OCI-LY7 (cell line): ENCODE measurements at regions of chr19 and their contacts with region 1.

Region 1: DNA sequence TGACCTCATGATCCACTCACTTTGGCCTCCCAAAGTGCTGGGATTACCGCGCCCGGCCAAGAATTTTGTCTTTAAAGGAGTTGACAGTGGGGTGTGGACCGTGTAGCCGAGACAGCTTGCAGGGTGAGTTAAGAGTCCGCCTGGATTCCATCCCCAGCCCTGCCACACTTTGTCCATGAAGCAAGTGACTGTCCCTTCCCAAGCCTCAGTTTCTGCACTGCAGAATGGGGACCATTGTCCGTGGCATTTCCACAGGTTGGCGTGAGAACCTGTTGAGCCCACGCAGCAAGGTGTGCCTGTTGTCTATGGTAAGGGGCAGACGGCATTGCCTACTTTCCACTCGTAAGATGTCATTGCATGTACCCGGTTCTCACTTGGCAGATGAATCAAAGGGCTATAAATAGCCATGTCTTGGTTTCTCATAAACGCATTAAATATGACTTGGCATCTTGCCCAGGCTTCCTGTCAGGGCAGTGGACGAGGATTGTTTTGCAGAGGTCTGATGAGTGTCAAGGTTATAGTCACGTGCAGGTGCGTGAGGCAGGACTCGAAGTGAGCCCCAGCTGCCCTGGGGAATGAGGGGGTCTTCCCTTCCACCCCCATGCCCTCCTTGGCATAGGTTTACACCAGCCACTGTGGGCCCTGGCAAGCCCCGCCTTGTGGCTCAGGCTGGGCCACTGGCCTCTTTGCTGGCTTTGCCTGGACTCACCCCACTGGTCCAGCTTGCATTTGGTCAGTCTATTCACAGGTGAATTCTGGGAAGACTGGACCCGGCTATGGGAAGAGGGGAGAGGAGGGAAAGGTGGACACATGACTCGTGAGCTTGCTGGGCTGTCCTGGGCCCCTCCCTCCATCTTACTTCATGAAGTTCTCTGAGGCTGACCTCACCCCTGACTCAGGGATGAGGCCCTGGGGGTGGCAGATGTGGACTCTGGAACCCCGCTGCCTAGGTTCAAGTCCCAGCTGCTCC is 14.6 kb downstream of the FAM187B start:
- DNase-seq: peak; percentile 93
- H3K4me3 ChIP-seq: peak overlapping the region; percentile 38
- H3K27ac ChIP-seq: peak overlapping the region; percentile 83
- H3K4me1 ChIP-seq: peaks cover 77% of the 10 kb centered on the region
- CTCF ChIP-seq: no peak

Region 2: DNA sequence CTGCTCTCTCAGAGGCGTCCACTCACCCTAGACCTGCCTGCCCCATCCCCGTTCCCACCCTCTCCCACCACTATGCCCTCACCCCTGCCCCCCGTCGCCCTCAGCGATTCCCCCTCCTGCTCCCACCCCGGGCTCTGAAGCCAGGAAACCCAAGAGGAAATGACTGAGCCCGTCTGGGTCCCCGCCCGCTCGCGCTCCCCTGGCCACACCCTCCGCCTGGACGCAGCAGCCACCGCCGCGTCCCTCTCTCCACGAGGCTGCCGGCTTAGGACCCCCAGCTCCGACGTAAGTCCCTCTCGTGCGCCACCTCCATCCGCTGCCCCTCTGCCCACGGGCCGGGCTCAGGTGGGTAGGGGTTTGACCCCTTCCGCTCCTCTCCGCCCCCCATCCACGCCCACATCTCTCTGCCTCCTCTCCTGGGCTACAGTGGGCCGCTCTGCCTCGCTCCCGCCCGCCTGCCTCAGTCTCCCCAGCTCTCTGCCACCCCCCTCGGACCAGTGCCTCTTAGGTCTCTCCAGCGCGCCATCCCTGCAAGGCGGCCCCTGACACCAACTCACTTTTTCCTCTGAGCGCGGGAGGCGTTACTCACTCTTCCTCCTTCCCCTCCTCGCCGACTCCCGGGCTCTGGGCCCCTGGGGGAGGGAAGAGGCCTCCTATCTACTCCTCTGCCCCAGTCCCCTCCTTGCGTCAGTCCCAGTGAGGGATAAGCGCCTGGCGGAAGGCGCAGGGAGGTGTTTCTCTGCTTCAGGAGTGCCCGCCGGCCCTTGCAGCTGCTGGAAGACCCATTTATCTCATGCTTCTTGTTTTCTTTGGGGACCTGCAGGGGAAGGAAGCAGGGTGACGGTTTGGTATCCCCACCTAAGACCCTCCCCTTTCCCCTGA is 59.2 kb before region 1 on chr19 and contains the start of gene FXYD5:
- CTCF ChIA-PET with region 1: interaction called, 3 read pairs
- POLR2A ChIA-PET with region 1: no interaction called
- intact Hi-C with region 1: loop called (anchors 2 kb)
- DNase-seq: peak; percentile 69
- H3K4me3 ChIP-seq: peak within 1 kb of the TSS; percentile 81
- H3K27ac ChIP-seq: peak within 1 kb of the TSS; percentile 51
- H3K4me1 ChIP-seq: peaks cover 24% of the 10 kb centered on the region
- CTCF ChIP-seq: no peak
- total RNA-seq, gene FXYD5: 76.8 and 82.1 TPM in 2 replicates